Endothelial cell of umbilical vein (primary cell): ENCODE measurements at regions of chr16 and their contacts with region 1.

Region 1: GRCh38 chr16:66650707-66651473 is 45.7 kb downstream of the CMTM4 start:
- DNase-seq: peak; percentile 81
- H3K4me3 ChIP-seq: no peak overlapping the region
- H3K27ac ChIP-seq: no peak overlapping the region
- H3K4me1 ChIP-seq: no peaks in the 10 kb centered on the region
- H3K27me3 ChIP-seq: no peaks in the 10 kb centered on the region
- CTCF ChIP-seq: peak; percentile 94
- POLR2A ChIP-seq: no peak

Region 2: DNA sequence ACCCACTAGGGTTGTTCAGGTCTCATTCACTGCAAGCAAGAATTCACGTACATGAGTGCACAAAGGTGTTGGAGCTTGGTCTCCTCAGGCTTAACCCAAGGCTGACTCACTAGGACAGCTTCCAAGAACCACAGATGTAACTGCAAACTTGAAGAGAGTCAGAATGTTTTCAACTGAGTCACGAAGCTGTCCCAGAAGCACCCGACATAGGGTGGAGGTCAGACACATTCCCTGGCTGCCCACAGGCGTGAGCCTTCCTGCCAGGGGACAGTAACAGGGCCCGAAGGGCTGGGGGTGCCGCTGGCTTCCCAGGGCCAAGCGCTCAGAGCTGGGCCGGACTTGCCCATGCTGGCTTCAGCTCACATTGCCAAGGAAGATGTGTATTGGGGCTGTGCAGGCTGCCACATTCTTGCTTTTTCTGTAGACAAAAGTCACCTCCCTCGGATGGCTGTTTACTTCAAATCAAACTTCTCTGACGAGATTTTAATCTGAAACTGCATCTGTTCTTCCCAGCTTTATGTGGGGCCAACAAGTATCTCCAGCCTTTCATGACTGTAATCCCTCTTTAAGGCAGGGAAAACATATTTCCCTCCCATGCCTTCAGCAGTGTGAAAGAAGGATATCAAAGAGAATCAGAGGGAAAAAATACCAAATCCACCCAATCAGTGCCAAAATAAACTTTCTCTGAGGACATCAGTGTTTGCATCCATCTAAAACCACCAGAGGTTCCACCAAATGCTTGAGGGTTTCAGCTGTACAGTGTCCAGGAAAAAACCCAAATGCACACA is 32.1 kb before region 1 on chr16:
- CTCF ChIA-PET with region 1: interaction called, 22 read pairs
- POLR2A ChIA-PET with region 1: no interaction called
- dilution Hi-C with region 1: no loop called
- intact Hi-C with region 1: no loop called
- DNase-seq: peak; percentile 71
- H3K4me3 ChIP-seq: no peak overlapping the region
- H3K27ac ChIP-seq: peak overlapping the region; percentile 19
- H3K4me1 ChIP-seq: peaks cover 20% of the 10 kb centered on the region
- H3K27me3 ChIP-seq: no peaks in the 10 kb centered on the region
- CTCF ChIP-seq: no peak
- POLR2A ChIP-seq: no peak

Region 3: DNA sequence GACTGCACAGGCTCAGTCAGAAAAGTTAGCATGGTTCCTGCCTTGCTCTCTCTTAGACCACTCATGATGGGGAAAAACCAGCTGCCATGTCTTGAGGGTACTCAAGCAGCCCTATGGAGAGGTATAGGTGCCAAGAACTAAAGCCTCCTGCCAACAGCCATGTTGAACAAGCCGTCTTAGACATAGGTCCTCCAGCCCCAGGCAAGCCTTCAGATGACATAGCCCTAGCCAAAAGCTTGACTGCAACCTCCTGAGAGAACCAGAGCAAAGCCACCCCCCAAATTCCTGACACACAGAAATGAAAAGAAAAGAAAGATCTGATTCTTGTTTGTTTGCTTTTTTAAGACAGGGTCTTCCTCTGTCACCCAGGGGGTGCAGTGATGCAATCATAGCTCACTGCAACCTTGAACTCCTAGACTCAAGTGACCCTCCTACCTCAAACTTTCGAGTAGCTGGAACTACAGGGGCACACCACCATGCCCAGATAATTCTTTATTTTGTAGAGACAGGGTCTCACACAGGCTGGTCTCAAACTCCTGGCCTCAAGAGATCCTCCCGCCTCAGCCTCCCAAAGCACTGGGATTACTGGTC is 10.1 kb before region 1 on chr16:
- CTCF ChIA-PET with region 1: interaction called, 17 read pairs
- POLR2A ChIA-PET with region 1: no interaction called
- dilution Hi-C with region 1: no loop called
- intact Hi-C with region 1: no loop called
- DNase-seq: no peak
- H3K4me3 ChIP-seq: no peak overlapping the region
- H3K27ac ChIP-seq: no peak overlapping the region
- H3K4me1 ChIP-seq: no peaks in the 10 kb centered on the region
- H3K27me3 ChIP-seq: no peaks in the 10 kb centered on the region
- CTCF ChIP-seq: no peak
- POLR2A ChIP-seq: no peak